CD4-positive, alpha-beta memory T cell (primary cell): ENCODE measurements at regions of chr12 and their contacts with region 1.

Region 1: GRCh38 chr12:49763006-49763591 is 21.7 kb downstream of the TMBIM6 start:
- DNase-seq: peak; percentile 74 to 86 (median 76)
- H3K4me3 ChIP-seq: no peak overlapping the region
- H3K4me3 Mint-ChIP-seq: peak overlapping the region in 7 of 8 donors; percentile 7 to 74 (median 49)
- H3K27ac ChIP-seq: peak overlapping the region; percentile 56
- H3K27ac Mint-ChIP-seq: peak overlapping the region; percentile 69 to 95 (median 86)
- H3K4me1 ChIP-seq: peaks cover 61% of the 10 kb centered on the region
- H3K4me1 Mint-ChIP-seq: peaks cover 50 to 64% (median 57%) of the 10 kb centered on the region in 4 donors
- H3K27me3 ChIP-seq: no peaks in the 10 kb centered on the region
- H3K27me3 Mint-ChIP-seq: no peaks in the 10 kb centered on the region

Region 2: DNA sequence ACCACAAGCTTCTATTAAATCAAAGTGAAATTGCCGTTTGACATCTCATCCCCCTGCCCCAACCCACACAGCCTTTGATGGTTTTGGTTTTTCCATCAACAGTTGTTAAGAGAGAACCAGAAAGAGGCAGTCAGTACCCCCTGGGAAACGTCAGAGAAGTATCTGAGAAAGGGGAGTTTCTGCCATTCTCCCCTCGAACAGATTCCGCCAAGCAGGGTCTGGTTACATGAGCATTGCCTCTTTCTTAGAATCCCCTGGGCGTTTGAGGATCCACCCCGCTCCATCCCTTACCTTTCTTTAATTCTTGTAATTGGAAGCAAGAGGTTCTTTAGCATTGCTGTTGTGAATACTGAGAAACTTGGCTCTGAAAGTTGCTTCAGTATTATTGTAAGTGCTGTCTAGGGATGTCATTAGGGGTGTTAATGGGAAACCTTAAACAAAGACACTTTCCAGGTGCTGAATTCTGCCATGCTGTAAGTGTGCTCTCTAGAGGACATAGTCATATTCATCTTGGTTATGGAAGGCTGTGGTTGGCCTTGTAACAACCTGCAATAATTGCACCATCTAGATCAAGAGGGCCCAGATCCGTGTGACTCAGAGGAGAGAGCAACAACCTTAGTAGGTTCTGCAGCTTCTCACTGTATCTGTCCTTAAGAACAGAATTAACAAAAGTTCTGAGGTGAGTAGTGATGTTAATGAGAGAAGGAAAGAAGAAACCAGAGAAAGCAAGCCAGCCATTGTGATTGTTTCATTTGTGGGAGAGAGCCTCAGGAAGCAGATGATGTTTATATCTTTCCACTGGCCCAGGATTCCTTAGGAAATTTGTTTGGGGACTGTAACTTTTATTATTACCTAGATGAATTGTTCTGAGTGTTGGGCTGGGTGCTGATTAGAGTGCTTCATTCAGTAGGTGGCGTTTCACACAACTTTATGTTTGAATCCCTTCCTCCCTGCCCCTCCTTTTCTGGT is 12.8 kb before region 1 on chr12:
- CTCF ChIA-PET with region 1: interaction called, 85 read pairs
- POLR2A ChIA-PET with region 1: interaction called, 6 read pairs
- intact Hi-C with region 1: no loop called
- DNase-seq: peak in 4 of 5 donors; percentile 12 to 74 (median 39)
- H3K4me3 ChIP-seq: no peak overlapping the region
- H3K4me3 Mint-ChIP-seq: peak overlapping the region; percentile 36 to 67 (median 58)
- H3K27ac ChIP-seq: peak overlapping the region; percentile 44
- H3K27ac Mint-ChIP-seq: peak overlapping the region; percentile 51 to 95 (median 71)
- H3K4me1 ChIP-seq: peaks cover 86% of the 10 kb centered on the region
- H3K4me1 Mint-ChIP-seq: peaks cover 48 to 95% (median 68%) of the 10 kb centered on the region in 4 donors
- H3K27me3 ChIP-seq: no peaks in the 10 kb centered on the region
- H3K27me3 Mint-ChIP-seq: no peaks in the 10 kb centered on the region